Tibial artery (tissue), 4 donors: ENCODE measurements at regions of chr2 and their contacts with region 1.

Region 1: DNA sequence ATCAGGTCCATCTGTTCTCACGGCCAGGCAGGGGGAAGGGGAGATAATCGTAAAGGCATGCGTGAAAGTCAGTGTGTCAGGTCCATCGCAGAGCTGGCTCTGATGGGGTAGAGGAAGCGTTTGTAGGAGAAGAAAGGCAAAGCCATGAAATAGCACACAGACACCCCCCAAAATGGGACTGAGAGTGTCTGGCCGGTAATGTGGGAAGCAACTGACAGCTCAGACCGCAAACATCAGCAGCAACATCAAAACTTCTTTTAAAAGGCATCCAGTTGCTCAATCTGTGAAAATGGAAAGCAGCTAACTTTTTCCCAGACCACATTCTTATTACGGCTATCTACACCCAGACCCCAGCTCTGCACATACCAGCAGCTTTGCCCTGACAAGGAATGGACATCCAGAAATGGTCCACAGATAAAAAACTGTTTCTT is 232.6 kb downstream of the EN1 start:
- DNase-seq: no peak
- H3K4me3 ChIP-seq: no peak overlapping the region
- H3K27ac ChIP-seq: no peak overlapping the region
- H3K4me1 ChIP-seq: no peaks in the 10 kb centered on the region
- H3K27me3 ChIP-seq: peaks cover 0 to 9% of the 10 kb centered on the region in 2 donors
- CTCF ChIP-seq: no peak

Region 2: DNA sequence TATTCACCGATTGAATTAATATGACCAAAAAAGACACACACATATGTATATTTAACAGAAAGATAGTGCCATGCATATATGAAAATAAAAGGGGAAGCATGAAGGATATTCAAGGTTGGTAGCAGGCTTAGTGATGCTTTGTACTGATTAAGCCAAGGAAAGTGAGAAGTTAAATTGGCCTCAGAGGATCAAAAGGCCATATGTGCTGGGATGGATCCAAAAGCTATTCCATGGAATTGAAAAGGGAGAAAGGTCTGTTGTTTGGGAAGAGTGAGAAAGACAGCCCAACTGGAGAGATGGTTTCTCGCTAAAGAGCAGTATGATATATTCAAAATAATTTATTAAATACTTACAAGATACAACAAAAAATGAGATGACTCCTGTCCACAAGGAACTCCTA is 460.7 kb before region 1 on chr2:
- intact Hi-C with region 1: loop called (anchors 5 kb)
- DNase-seq: no peak
- H3K4me3 ChIP-seq: no peak overlapping the region
- H3K27ac ChIP-seq: no peak overlapping the region
- H3K4me1 ChIP-seq: peaks cover 0 to 8% (median 0%) of the 10 kb centered on the region in 4 donors
- H3K27me3 ChIP-seq: no peaks in the 10 kb centered on the region
- CTCF ChIP-seq: no peak

Region 3: GRCh38 chr2:118738524-118739308 is 123.9 kb after region 1 on chr2:
- intact Hi-C with region 1: no loop called
- DNase-seq: peak; percentile 77 to 79
- H3K4me3 ChIP-seq: no peak overlapping the region
- H3K27ac ChIP-seq: no peak overlapping the region
- H3K4me1 ChIP-seq: peaks cover 0 to 8% (median 0%) of the 10 kb centered on the region in 4 donors
- H3K27me3 ChIP-seq: no peaks in the 10 kb centered on the region
- CTCF ChIP-seq: no peak